ENCODE measurements at regions of chr5 and their contacts with region 1.

Region 1: DNA sequence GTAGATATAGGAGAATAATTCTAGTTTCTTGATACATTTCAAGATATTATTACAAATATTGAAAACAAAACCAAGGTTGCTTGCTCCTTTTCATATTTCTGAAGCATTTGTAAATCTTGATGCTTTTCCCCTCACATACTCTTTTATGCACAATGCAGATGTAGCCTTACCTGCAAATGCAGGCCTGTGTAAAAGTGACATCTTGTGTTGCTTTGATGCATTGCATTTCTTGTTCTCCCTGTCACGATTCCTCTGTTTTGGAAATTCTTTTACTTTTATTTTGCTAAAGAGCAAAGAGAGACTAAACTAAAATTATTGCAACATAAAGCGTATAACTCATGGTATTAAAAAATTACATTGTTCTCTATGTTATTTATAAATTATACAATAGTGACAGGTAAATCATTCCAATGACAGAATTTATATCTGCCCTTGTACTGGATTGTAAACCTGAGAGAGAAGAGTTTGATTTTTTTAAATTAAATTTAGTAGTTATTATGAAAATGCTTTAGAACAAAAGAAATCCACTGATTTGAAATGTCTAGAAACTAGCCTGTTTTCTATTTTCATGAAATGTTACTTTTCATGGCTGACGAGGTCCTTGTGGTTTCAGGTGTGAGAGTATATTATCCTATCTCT is 970.0 kb downstream of the MAT2B start:
- DNase-seq: peak; percentile 34
- H3K4me3 Mint-ChIP-seq: no peak overlapping the region
- H3K27ac Mint-ChIP-seq: no peak overlapping the region
- H3K4me1 Mint-ChIP-seq: no peaks in the 10 kb centered on the region
- H3K27me3 Mint-ChIP-seq: no peaks in the 10 kb centered on the region
- CTCF ChIP-seq: peak; percentile 58

Region 2: DNA sequence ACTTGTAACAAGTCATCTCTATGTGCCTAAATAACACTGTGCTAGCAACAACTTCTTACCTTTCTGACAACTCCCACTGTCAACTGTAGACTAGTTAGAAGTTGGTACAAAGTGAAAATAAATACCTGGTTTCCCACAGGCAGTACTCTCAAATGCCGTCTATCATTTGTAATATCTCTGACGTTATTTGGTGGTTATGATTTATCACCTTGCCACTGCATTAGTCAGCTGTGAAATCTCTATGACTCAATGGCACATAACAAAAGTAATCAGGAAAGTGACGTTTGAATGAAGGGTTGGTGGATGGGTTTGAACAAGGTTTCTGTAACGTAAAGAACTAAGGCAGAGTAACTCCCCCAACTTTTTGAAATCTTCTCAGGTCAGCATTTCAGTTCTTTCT is 377.7 kb before region 1 on chr5:
- CTCF ChIA-PET with region 1: no interaction called
- intact Hi-C with region 1: no loop called
- DNase-seq: no peak
- H3K4me3 Mint-ChIP-seq: no peak overlapping the region
- H3K27ac Mint-ChIP-seq: peak overlapping the region; percentile 63
- H3K4me1 Mint-ChIP-seq: peaks cover 19% of the 10 kb centered on the region
- H3K27me3 Mint-ChIP-seq: no peaks in the 10 kb centered on the region
- CTCF ChIP-seq: no peak

Region 3: DNA sequence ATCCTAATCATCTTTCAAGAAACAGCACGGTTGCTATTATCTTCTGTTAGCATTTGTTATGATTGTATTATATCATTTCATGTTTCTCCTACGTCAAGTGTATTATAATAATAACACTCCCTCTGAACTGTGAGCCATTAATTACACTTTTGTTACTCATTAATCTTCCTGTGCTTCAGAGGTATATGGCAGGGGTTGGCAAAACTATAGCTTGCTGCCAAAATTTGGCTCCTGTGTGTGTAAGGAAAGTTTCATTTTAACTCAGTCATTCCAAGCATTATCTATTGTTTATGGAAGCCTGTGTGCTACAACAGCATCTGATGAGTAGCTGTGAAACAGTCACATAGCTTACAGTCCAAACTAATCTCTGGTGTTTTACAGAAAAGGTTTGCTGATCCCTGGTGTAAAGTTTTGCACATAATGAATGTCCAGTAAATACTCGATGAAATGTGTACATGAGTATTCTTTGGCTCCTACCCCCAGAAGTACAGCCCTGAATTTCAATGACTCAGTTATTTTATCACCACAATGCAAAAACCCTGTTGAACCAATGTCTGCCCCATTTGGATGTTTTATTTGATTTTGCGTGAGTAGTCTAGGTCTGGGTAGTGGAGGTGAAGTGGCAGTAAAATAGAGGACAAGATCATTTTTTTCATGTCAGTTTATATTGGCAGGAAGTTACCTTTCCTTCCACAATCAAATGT is 321.8 kb before region 1 on chr5:
- CTCF ChIA-PET with region 1: no interaction called
- intact Hi-C with region 1: loop called (anchors 5 kb)
- DNase-seq: no peak
- H3K4me3 Mint-ChIP-seq: no peak overlapping the region
- H3K27ac Mint-ChIP-seq: peak overlapping the region; percentile 8
- H3K4me1 Mint-ChIP-seq: peaks cover 15% of the 10 kb centered on the region
- H3K27me3 Mint-ChIP-seq: no peaks in the 10 kb centered on the region
- CTCF ChIP-seq: no peak

Region 4: GRCh38 chr5:164256351-164256750 is 219.1 kb before region 1 on chr5:
- CTCF ChIA-PET with region 1: no interaction called
- intact Hi-C with region 1: loop called (anchors 2 kb)
- DNase-seq: no peak
- H3K4me3 Mint-ChIP-seq: no peak overlapping the region
- H3K27ac Mint-ChIP-seq: no peak overlapping the region
- H3K4me1 Mint-ChIP-seq: peaks cover 12% of the 10 kb centered on the region
- H3K27me3 Mint-ChIP-seq: no peaks in the 10 kb centered on the region
- CTCF ChIP-seq: no peak

Region 5: DNA sequence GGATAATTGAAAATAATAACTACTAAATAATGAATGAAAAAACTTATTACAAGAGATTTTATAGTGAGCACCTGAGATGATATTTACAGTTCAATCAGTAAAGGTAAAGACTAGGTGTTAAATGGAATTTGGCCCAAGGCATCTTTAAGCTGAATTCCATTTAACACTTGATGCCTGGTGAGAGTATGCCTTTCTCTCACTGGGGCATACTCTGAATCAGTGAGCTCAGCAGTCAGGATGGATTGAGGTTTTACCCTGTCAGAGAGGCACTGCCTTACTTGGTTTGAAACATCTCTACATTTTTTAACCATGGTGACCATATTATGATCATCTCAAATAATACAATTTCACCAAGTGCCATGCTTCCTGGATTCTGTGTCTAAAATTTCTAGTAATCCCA is 446.3 kb after region 1 on chr5:
- CTCF ChIA-PET with region 1: no interaction called
- intact Hi-C with region 1: no loop called
- DNase-seq: no peak
- H3K4me3 Mint-ChIP-seq: no peak overlapping the region
- H3K27ac Mint-ChIP-seq: no peak overlapping the region
- H3K4me1 Mint-ChIP-seq: no peaks in the 10 kb centered on the region
- H3K27me3 Mint-ChIP-seq: no peaks in the 10 kb centered on the region
- CTCF ChIP-seq: no peak